Sigmoid colon (tissue), 7 donors: ENCODE measurements at regions of chr5 and their contacts with region 1.

Region 1: DNA sequence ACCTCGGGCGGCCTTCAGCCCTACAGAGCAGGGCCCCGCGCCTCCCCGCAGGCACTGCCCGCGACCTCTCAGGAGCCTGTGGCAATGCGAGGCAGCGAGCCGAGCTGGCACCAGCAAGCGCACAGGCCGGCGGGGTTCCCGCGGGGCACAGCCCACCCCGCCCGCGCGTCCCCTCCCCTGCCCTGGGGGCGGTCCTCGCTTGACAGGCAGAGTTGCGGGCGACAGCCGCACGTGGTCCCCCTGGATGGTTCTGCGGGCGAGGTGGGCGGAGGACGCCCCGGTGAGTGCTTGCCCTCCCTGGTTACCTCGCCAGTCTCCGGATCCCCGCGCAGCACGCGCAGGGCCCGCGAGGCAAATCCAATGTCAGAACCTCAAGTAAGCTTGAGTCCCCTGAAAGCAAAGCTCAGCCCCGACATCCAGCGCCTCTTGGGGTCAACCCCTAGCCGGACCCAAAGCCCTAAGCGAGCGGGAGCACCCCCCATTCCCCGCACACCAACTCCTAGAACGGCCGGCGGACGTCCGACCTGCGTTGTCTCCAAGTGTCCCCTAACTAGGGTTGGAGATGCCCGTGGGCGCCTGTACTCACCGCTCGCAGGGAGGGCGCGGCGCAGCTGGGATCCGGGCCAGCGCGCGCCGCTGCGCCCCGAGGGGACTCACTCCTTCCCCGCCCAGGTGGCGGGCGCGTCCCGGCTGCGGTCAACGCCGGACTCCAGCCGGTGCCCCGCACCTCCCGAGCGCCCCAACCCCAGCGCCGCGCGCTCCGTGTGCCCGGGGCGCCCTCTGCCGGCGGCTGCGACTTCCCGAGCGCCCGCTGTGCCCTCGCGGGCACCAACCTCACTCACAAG is at the start of gene DRD1:
- DNase-seq: no peak
- H3K4me3 ChIP-seq: peak within 1 kb of the TSS in 3 of 4 donors; percentile 29 to 41 (median 31)
- H3K27ac ChIP-seq: no peak within 1 kb of the TSS
- H3K4me1 ChIP-seq: peaks cover 0 to 23% (median 14%) of the 10 kb centered on the region in 4 donors
- H3K27me3 ChIP-seq: peaks cover 23 to 63% (median 30%) of the 10 kb centered on the region in 3 donors
- CTCF ChIP-seq: peak in 1 of 4 experiments; percentile 61
- EP300 ChIP-seq: no peak
- POLR2A ChIP-seq: no peak
- total RNA-seq, gene DRD1: not detected

Region 2: GRCh38 chr5:174951146-174951780 is 493.0 kb before region 1 on chr5:
- intact Hi-C with region 1: loop called (anchors 2 kb)
- DNase-seq: no peak
- H3K4me3 ChIP-seq: no peak overlapping the region
- H3K27ac ChIP-seq: no peak overlapping the region
- H3K4me1 ChIP-seq: no peaks in the 10 kb centered on the region
- H3K27me3 ChIP-seq: peaks cover 0 to 11% (median 0%) of the 10 kb centered on the region in 3 donors
- CTCF ChIP-seq: peak in 3 of 4 experiments; percentile 62 to 76 (median 68)
- EP300 ChIP-seq: no peak
- POLR2A ChIP-seq: no peak

Region 3: DNA sequence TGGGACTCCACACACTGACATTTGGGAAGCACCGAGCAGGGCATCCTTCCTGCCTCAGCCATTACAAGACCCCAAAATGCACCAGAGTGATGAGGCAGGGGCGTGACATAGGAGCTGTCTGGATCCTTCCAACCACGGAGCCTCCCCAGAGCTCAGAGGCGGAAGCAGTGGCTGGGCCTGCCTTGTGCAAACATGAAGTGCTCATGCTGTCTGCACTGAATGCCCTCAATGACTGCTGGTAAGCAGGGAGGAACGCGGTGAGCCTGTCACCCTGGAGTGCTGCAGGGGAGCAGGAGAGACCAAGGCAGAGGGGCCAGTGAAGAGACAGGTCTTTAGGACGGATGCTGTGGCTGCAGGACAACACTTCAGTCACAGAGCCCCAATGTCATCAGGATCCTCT is 153.4 kb after region 1 on chr5:
- intact Hi-C with region 1: no loop called
- DNase-seq: no peak
- H3K4me3 ChIP-seq: no peak overlapping the region
- H3K27ac ChIP-seq: no peak overlapping the region
- H3K4me1 ChIP-seq: no peaks in the 10 kb centered on the region
- H3K27me3 ChIP-seq: peaks cover 0 to 18% (median 0%) of the 10 kb centered on the region in 3 donors
- CTCF ChIP-seq: no peak
- EP300 ChIP-seq: no peak
- POLR2A ChIP-seq: no peak

Region 4: DNA sequence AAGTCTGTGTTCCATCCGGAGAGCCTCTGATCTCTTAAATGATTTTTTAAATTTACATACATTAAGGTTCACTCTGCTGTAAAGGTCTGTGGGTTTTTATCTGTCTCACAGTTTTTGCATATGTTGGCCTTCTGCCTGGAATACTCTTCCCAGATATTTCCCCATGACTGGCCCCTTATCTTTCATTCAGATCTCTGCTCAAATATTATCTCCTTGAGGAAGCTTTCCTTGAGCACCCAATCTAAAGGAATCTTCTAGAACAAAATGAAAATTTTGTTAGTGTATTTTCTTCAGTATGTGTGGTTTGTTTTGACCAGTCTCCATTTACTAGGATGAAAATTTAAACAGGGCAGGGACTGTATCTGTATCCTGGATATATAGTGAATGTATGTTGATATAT is 1030.2 kb after region 1 on chr5:
- intact Hi-C with region 1: no loop called
- DNase-seq: no peak
- H3K4me3 ChIP-seq: no peak overlapping the region
- H3K27ac ChIP-seq: no peak overlapping the region
- H3K4me1 ChIP-seq: no peaks in the 10 kb centered on the region
- H3K27me3 ChIP-seq: no peaks in the 10 kb centered on the region
- CTCF ChIP-seq: no peak
- EP300 ChIP-seq: no peak
- POLR2A ChIP-seq: no peak